ENCODE measurements at regions of chr11 and their contacts with region 1.

Region 1: GRCh38 chr11:2366733-2367132 is 10.4 kb upstream of the CD81 start:
- DNase-seq: no peak
- ATAC-seq: no peak
- H3K4me3 Mint-ChIP-seq: no peak overlapping the region
- H3K27ac Mint-ChIP-seq: no peak overlapping the region
- H3K4me1 Mint-ChIP-seq: no peaks in the 10 kb centered on the region
- H3K27me3 Mint-ChIP-seq: no peaks in the 10 kb centered on the region
- CTCF ChIP-seq: no peak

Region 2: GRCh38 chr11:2355000-2355644 is 11.6 kb before region 1 on chr11:
- CTCF ChIA-PET with region 1: no interaction called
- POLR2A ChIA-PET with region 1: no interaction called
- intact Hi-C with region 1: no loop called
- DNase-seq: no peak
- ATAC-seq: no peak
- H3K4me3 Mint-ChIP-seq: no peak overlapping the region
- H3K27ac Mint-ChIP-seq: no peak overlapping the region
- H3K4me1 Mint-ChIP-seq: peaks cover 12% of the 10 kb centered on the region
- H3K27me3 Mint-ChIP-seq: no peaks in the 10 kb centered on the region
- CTCF ChIP-seq: no peak

Region 3: DNA sequence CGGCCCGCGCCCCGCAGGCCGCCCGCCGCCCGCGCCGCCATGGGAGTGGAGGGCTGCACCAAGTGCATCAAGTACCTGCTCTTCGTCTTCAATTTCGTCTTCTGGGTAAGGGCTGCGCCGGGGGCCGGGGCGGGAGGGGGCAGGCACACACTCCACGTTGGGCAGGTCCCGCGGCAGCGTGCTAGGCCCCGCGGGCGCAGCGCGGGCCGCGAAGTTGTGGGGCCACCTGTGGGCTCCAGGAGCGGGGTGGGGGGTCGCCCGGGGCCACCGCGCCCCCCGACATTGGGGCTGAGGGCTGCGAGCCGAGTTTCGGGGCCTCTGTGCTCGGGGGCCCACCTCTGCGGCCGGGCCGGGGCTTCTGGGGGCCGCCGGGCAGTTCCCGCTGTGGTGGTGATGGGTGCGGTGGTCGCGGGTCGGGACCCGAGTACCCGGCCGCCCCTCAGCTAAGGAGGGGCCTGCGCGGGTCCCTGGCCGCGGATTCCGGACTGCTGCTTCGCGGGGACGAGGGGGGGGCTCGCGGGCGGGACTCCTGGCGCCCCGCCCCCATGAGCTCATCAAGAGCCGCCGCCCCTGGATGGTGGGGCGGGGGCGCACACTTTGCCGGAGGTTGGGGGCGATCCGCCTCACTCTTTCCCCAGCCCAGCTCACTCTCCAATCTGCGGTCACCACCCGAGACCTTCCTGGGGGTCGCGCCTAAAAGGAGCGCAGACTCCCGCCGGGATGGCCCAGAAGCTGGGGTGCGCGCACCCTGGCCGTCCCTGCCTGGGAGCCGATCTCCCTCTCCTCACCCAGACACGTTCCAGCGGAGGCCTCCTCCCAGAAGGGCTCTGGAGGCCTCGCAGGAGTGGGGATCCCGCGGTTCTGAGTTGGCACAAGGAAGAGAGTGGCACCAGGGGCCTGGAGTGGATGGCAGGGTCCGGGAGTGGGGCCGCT is 11.0 kb after region 1 on chr11:
- CTCF ChIA-PET with region 1: no interaction called
- POLR2A ChIA-PET with region 1: interaction called, 10 read pairs
- intact Hi-C with region 1: no loop called
- DNase-seq: no peak
- ATAC-seq: peak; percentile 43
- H3K4me3 Mint-ChIP-seq: peak overlapping the region; percentile 82
- H3K27ac Mint-ChIP-seq: peak overlapping the region; percentile 86
- H3K4me1 Mint-ChIP-seq: peaks cover 46% of the 10 kb centered on the region
- H3K27me3 Mint-ChIP-seq: no peaks in the 10 kb centered on the region
- CTCF ChIP-seq: no peak

Region 4: DNA sequence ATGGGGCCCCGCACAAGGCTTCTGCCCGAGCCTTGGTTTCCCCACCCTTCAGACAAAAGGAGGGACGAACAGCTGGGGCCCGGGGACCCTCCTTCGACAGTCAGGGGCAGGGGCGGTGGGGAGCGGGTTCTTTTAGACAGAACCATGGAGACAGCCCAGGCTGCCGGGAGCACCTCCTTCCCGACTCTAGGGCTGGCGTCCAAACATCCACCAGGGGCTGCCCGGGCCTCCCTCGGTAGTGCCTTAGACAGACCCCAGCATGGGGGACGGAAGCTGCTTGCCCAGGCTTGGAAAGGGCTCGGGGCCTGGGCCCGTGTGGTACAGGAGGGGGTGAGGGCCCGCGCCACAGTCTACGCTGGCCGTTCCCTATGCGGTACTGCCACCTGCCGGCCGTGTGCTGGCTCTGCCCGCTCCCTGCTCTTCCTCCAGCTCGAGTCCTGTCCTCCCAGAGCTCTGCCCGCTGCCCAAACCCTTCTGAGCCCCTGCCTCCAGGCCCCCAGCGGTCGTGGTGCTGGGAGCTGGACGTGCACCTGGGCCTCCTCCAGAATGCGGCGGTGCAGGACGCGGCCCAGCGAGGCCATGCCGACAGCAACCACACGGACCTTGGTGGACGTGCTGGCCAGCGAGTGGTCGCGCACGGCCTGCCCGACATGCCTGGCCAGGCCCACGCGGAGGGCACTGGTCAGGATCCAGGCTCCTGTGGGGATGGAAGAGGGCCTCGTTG is 53.9 kb after region 1 on chr11:
- CTCF ChIA-PET with region 1: no interaction called
- POLR2A ChIA-PET with region 1: no interaction called
- intact Hi-C with region 1: no loop called
- DNase-seq: peak; percentile 69
- ATAC-seq: peak; percentile 97
- H3K4me3 Mint-ChIP-seq: no peak overlapping the region
- H3K27ac Mint-ChIP-seq: no peak overlapping the region
- H3K4me1 Mint-ChIP-seq: peaks cover 6% of the 10 kb centered on the region
- H3K27me3 Mint-ChIP-seq: no peaks in the 10 kb centered on the region
- CTCF ChIP-seq: peak; percentile 32

Measured in activated B cell treated with CpG ODN at 0.5 μM for 24 hours (primary cell).